ENCODE measurements at regions of chr17 and their contacts with region 1.

Region 1: DNA sequence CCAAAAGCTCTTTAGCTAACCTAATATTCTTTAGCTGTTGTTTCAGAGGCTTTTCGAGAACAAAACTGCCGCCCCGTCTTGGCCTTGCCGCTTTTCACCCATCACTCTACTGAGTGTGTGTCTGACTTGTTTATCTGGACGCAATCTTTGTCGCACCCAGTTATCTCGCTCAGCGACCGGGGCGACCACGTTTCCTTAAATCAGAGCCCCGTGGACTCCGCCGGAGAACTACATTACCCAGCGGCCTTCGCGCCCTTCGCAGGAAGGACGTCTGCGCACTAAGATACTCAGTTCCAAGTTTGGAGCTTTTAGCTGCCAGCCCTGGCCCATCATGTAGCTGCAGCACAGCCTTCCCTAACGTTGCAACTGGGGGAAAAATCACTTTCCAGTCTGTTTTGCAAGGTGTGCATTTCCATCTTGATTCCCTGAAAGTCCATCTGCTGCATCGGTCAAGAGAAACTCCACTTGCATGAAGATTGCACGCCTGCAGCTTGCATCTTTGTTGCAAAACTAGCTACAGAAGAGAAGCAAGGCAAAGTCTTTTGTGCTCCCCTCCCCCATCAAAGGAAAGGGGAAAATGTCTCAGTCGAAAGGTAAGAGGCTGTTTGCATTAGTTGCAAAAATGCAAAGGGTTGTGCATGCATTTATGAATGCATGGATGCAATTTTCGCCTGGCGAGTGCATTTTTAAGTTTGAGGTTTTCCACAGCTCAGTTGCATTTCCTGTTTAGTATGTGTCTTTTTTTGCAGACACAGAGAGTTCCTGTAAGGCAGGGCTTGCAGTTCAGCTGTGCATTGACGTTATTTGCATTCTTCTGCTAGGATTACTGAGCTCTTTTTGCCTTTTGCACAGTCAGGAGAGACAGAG is at the start of gene MAP2K6:
- DNase-seq: peak; percentile 60 to 89 (median 85)
- ATAC-seq: peak; percentile 96
- H3K4me3 ChIP-seq: peak within 1 kb of the TSS; percentile 66
- H3K4me3 Mint-ChIP-seq: no peak within 1 kb of the TSS
- H3K27ac ChIP-seq: peak within 1 kb of the TSS; percentile 7 to 60
- H3K27ac Mint-ChIP-seq: no peak within 1 kb of the TSS
- H3K4me1 ChIP-seq: peaks cover 28% of the 10 kb centered on the region
- H3K4me1 Mint-ChIP-seq: peaks cover 12% of the 10 kb centered on the region
- H3K27me3 ChIP-seq: no peaks in the 10 kb centered on the region
- H3K27me3 Mint-ChIP-seq: no peaks in the 10 kb centered on the region
- CTCF ChIP-seq: no peak
- total RNA-seq, gene MAP2K6: 7.1 to 8.6 TPM

Region 2: GRCh38 chr17:68512247-68512982 is 902.2 kb before region 1 on chr17 and contains the start of gene PRKAR1A:
- CTCF ChIA-PET with region 1: no interaction called
- POLR2A ChIA-PET with region 1: no interaction called
- intact Hi-C with region 1: loop called (anchors 2 to 10 kb)
- DNase-seq: peak; percentile 88 to 98 (median 94)
- ATAC-seq: peak; percentile 79
- H3K4me3 ChIP-seq: peak within 1 kb of the TSS; percentile 85 to 87
- H3K4me3 Mint-ChIP-seq: peak within 1 kb of the TSS; percentile 100
- H3K27ac ChIP-seq: peak within 1 kb of the TSS; percentile 99
- H3K27ac Mint-ChIP-seq: peak within 1 kb of the TSS; percentile 100
- H3K4me1 ChIP-seq: peaks cover 22% of the 10 kb centered on the region
- H3K4me1 Mint-ChIP-seq: peaks cover 54% of the 10 kb centered on the region
- H3K27me3 ChIP-seq: no peaks in the 10 kb centered on the region
- H3K27me3 Mint-ChIP-seq: no peaks in the 10 kb centered on the region
- CTCF ChIP-seq: no peak
- total RNA-seq, gene PRKAR1A: 61.2 to 63.5 TPM

Region 3: GRCh38 chr17:69327060-69327831 is 87.4 kb before region 1 on chr17 and contains the start of gene ABCA5:
- CTCF ChIA-PET with region 1: no interaction called
- POLR2A ChIA-PET with region 1: interaction called, 27 read pairs
- intact Hi-C with region 1: loop called (anchors 1 kb)
- DNase-seq: peak; percentile 72 to 98 (median 87)
- ATAC-seq: peak; percentile 96
- H3K4me3 ChIP-seq: peak within 1 kb of the TSS; percentile 79 to 94
- H3K4me3 Mint-ChIP-seq: peak within 1 kb of the TSS; percentile 96
- H3K27ac ChIP-seq: peak within 1 kb of the TSS; percentile 85 to 92
- H3K27ac Mint-ChIP-seq: peak within 1 kb of the TSS; percentile 97
- H3K4me1 ChIP-seq: peaks cover 17% of the 10 kb centered on the region
- H3K4me1 Mint-ChIP-seq: peaks cover 30% of the 10 kb centered on the region
- H3K27me3 ChIP-seq: peaks cover 0 to 3% of the 10 kb centered on the region in 2 experiments
- H3K27me3 Mint-ChIP-seq: peaks cover 7% of the 10 kb centered on the region
- CTCF ChIP-seq: no peak
- total RNA-seq, gene ABCA5: 21.8 to 22.4 TPM

Region 4: DNA sequence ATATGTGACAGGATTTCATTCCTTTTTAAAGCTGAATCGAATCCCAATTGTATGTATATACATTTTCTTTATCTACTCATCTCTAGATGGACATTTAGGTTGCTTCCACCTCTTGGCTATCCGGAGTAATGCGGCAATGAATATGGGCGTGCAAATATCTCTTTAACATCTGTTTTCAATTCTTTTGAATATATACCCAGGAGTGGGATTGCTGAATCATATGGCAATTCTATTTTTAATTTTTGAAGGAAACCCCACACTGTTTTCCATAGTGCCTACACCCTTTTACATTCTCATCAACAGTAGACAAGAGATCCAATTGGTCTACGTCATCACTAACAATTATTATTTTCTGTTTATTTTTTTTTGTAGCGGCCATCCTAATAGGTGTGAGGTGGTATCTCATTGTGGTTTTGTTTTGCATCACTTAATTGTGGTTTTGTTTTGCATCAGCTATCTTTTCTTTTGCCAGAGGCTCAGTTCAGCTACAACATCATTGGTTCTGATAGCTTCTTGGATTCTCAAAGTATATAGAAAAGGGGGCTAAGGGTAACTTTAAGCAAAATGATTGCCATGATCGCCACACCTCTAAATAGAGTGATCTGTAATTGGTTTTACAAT is 25.7 kb before region 1 on chr17:
- CTCF ChIA-PET with region 1: interaction called, 17 read pairs
- POLR2A ChIA-PET with region 1: no interaction called
- intact Hi-C with region 1: no loop called
- DNase-seq: no peak
- ATAC-seq: no peak
- H3K4me3 ChIP-seq: no peak overlapping the region
- H3K4me3 Mint-ChIP-seq: no peak overlapping the region
- H3K27ac ChIP-seq: no peak overlapping the region
- H3K27ac Mint-ChIP-seq: no peak overlapping the region
- H3K4me1 ChIP-seq: no peaks in the 10 kb centered on the region
- H3K4me1 Mint-ChIP-seq: no peaks in the 10 kb centered on the region
- H3K27me3 ChIP-seq: peaks cover 0 to 3% of the 10 kb centered on the region in 2 experiments
- H3K27me3 Mint-ChIP-seq: peaks cover 12% of the 10 kb centered on the region
- CTCF ChIP-seq: no peak

Region 5: GRCh38 chr17:69428254-69428980 is 13.8 kb after region 1 on chr17:
- CTCF ChIA-PET with region 1: interaction called, 4 read pairs
- POLR2A ChIA-PET with region 1: interaction called, 8 read pairs
- intact Hi-C with region 1: loop called in 1 of 2 experiments (anchors 2 kb)
- DNase-seq: no peak
- ATAC-seq: no peak
- H3K4me3 ChIP-seq: no peak overlapping the region
- H3K4me3 Mint-ChIP-seq: no peak overlapping the region
- H3K27ac ChIP-seq: no peak overlapping the region
- H3K27ac Mint-ChIP-seq: no peak overlapping the region
- H3K4me1 ChIP-seq: peaks cover 7% of the 10 kb centered on the region
- H3K4me1 Mint-ChIP-seq: peaks cover 79% of the 10 kb centered on the region
- H3K27me3 ChIP-seq: no peaks in the 10 kb centered on the region
- H3K27me3 Mint-ChIP-seq: no peaks in the 10 kb centered on the region
- CTCF ChIP-seq: no peak

Region 6: GRCh38 chr17:69501591-69502468 is 87.2 kb after region 1 on chr17:
- CTCF ChIA-PET with region 1: no interaction called
- POLR2A ChIA-PET with region 1: interaction called, 3 read pairs
- intact Hi-C with region 1: loop called in 1 of 2 experiments (anchors 10 kb)
- DNase-seq: no peak
- ATAC-seq: no peak
- H3K4me3 ChIP-seq: no peak overlapping the region
- H3K4me3 Mint-ChIP-seq: no peak overlapping the region
- H3K27ac ChIP-seq: no peak overlapping the region
- H3K27ac Mint-ChIP-seq: peak overlapping the region; percentile 11
- H3K4me1 ChIP-seq: peaks cover 5% of the 10 kb centered on the region
- H3K4me1 Mint-ChIP-seq: peaks cover 46% of the 10 kb centered on the region
- H3K27me3 ChIP-seq: no peaks in the 10 kb centered on the region
- H3K27me3 Mint-ChIP-seq: no peaks in the 10 kb centered on the region
- CTCF ChIP-seq: no peak

Region 7: DNA sequence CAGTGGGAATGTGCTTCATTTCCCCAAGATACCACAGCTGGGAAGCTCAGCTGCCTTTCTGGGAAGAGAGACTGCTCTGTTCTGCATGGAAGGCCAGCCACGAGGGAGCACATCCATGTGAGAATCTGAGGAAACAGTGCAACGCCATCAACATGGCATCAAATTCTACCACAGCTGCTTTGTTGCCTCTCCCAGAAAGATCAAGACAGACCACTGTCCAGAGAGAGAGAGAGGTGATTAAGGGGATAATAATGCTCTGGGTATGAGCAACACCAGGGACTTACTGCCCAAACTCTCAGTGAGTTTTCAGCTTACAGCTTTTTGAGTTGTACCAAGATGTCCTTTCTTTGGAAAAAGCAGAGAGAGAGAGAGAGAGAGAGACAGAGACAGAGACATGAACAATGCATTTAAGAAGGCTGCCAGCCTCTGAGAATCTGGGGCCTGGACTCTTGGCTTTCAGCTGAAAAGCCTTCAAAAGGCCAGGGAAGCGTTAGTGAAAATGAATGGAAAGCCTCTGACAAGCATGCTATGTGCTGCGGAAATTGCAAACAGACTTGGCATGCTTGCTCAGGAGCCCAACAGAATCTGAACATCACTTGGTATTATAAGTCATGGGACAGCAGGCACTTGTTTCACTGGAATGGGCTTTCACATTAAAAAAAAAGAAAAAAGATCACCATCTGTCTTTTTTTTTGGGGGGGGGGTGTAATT is 223.0 kb after region 1 on chr17:
- CTCF ChIA-PET with region 1: no interaction called
- POLR2A ChIA-PET with region 1: no interaction called
- intact Hi-C with region 1: no loop called
- DNase-seq: no peak
- ATAC-seq: no peak
- H3K4me3 ChIP-seq: no peak overlapping the region
- H3K4me3 Mint-ChIP-seq: no peak overlapping the region
- H3K27ac ChIP-seq: no peak overlapping the region
- H3K27ac Mint-ChIP-seq: no peak overlapping the region
- H3K4me1 ChIP-seq: no peaks in the 10 kb centered on the region
- H3K4me1 Mint-ChIP-seq: no peaks in the 10 kb centered on the region
- H3K27me3 ChIP-seq: no peaks in the 10 kb centered on the region
- H3K27me3 Mint-ChIP-seq: no peaks in the 10 kb centered on the region
- CTCF ChIP-seq: no peak